Heart left ventricle (tissue), 16 donors: ENCODE measurements at regions of chr2 and their contacts with region 1.

Region 1: DNA sequence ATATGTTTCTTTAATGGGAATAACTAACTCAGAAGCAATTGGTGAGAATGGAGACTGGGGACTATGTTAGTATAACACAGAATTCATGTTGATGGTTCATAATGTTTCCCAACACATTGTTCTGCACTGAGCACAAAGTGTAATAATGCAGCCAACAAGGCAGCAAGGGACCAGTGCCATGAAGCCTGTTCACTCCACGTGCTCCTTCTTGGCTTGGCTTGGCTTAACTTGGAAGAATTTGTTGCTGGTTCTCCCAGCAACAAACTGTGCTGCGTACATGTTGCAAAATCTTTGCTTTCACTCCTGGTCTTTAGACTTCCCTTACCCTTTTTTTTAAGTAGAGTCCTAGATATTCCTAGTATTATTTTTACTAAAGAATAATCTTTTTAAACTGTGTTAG is 129.7 kb downstream of the MAP3K20 start:
- DNase-seq: peak; percentile 65 to 88 (median 81)
- ATAC-seq: peak; percentile 92 to 97 (median 96)
- H3K4me3 ChIP-seq: no peak overlapping the region
- H3K27ac ChIP-seq: peak overlapping the region; percentile 61 to 89 (median 78)
- H3K4me1 ChIP-seq: peaks cover 0 to 79% (median 29%) of the 10 kb centered on the region in 12 donors
- H3K27me3 ChIP-seq: no peaks in the 10 kb centered on the region
- CTCF ChIP-seq: no peak
- POLR2A ChIP-seq: no peak

Region 2: GRCh38 chr2:172972005-172972619 is 233.3 kb before region 1 on chr2:
- intact Hi-C with region 1: loop called in 3 of 10 experiments (anchors 5 kb)
- DNase-seq: peak in 3 of 5 donors; percentile 30 to 49 (median 42)
- ATAC-seq: peak in 2 of 4 donors; percentile 35 to 56
- H3K4me3 ChIP-seq: no peak overlapping the region
- H3K27ac ChIP-seq: no peak overlapping the region
- H3K4me1 ChIP-seq: peaks cover 0 to 43% (median 23%) of the 10 kb centered on the region in 12 donors
- H3K27me3 ChIP-seq: no peaks in the 10 kb centered on the region
- CTCF ChIP-seq: peak; percentile 56 to 88 (median 74)
- POLR2A ChIP-seq: no peak

Region 3: DNA sequence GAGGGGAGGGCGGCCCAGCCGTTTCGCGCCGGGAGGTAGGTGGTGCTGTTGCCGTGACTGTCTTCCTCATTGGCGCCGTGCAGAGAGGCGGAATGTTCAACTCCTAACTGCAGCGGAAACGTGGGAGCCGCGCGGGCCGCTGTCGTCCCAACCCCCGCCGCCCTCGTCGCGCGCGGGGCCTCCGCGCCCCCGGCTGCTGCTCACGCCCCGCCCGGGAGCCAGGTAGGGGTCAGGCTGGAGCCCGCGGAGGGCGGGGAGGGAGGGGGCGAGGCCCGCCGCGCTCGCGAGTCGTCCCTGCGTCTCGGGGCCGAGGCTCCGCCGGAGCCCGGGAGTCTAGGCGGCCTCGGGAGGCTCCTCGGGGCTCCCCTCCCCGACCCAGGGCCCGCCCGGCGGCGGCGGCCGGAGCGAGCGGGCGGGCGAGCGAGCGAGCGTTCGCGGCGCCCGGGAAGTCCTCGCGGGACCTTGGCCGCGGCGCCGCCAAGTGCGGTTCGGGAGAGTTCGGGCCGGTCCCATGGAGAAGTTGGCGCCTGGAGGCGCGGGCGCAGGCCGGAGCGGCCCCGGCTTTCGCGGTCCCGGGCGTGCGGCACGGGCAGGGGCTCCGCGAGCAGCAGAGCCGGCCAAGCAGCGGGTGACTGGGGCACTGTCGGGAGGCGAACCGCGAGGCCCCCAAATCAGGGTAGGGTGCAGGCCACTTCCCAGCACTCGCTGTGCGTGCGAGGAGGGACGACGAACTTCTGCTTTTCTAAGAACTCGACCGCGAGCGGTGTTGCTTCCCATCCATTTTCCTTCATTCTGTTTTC is 129.4 kb before region 1 on chr2 and contains the start of gene MAP3K20:
- intact Hi-C with region 1: loop called (anchors 2 to 10 kb)
- DNase-seq: peak; percentile 81 to 91 (median 88)
- ATAC-seq: peak; percentile 67 to 89 (median 86)
- H3K4me3 ChIP-seq: peak within 1 kb of the TSS; percentile 64 to 85 (median 78)
- H3K27ac ChIP-seq: peak within 1 kb of the TSS; percentile 90 to 98 (median 96)
- H3K4me1 ChIP-seq: peaks cover 0 to 47% (median 18%) of the 10 kb centered on the region in 12 donors
- H3K27me3 ChIP-seq: no peaks in the 10 kb centered on the region
- CTCF ChIP-seq: peak in 11 of 12 donors; percentile 11 to 71 (median 54)
- POLR2A ChIP-seq: peak in 1 of 2 donors; percentile 71
- total RNA-seq, gene MAP3K20: 275 to 487 (median 451) TPM

Region 4: GRCh38 chr2:173090276-173090877 is 115.0 kb before region 1 on chr2:
- intact Hi-C with region 1: loop called in 4 of 10 experiments (anchors 5 kb)
- DNase-seq: peak in 4 of 5 donors; percentile 34 to 66 (median 50)
- ATAC-seq: peak; percentile 57 to 83 (median 74)
- H3K4me3 ChIP-seq: peak overlapping the region in 7 of 12 donors; percentile 4 to 34 (median 30)
- H3K27ac ChIP-seq: peak overlapping the region; percentile 48 to 85 (median 75)
- H3K4me1 ChIP-seq: peaks cover 0 to 77% (median 22%) of the 10 kb centered on the region in 12 donors
- H3K27me3 ChIP-seq: no peaks in the 10 kb centered on the region
- CTCF ChIP-seq: no peak
- POLR2A ChIP-seq: no peak

Region 5: GRCh38 chr2:173099804-173100203 is 105.6 kb before region 1 on chr2:
- intact Hi-C with region 1: loop called in 1 of 10 experiments (anchors 5 kb)
- DNase-seq: no peak
- ATAC-seq: peak in 1 of 4 donors; percentile 14
- H3K4me3 ChIP-seq: no peak overlapping the region
- H3K27ac ChIP-seq: no peak overlapping the region
- H3K4me1 ChIP-seq: peaks cover 0 to 77% (median 28%) of the 10 kb centered on the region in 12 donors
- H3K27me3 ChIP-seq: no peaks in the 10 kb centered on the region
- CTCF ChIP-seq: no peak
- POLR2A ChIP-seq: no peak